GM10248 (cell line): ENCODE measurements at regions of chr12 and their contacts with region 1.

Region 1: DNA sequence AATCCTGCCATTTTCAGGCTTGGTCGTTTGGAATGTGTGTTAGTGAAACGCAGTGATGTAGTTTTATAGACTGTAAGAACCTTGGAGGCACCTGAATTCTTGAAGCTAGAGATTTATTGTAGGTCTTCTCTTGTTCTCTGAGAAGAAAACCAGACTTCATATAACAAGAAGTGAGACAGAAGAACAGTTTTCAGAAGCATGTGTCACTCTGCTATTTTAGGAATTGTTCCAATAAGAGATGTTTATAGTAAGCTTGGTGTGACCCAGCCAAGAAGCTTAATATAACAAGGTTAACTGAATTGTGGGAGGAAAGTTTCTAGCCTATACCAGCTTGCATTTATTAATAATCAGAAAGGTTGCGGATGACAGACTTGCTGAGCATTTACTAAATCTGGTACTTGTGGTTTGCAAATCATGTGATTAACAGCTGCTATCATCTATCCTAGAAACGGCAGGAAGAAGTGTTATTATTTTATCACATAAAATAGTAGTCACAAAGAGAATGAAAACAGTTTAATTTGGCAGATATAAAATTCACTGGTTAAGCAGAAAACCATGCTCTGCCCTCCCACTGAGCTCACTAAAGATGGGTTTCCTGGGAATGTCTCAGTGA is 49.2 kb upstream of the BCAT1 start:
- DNase-seq: peak; percentile 62
- CTCF ChIP-seq: no peak

Region 2: DNA sequence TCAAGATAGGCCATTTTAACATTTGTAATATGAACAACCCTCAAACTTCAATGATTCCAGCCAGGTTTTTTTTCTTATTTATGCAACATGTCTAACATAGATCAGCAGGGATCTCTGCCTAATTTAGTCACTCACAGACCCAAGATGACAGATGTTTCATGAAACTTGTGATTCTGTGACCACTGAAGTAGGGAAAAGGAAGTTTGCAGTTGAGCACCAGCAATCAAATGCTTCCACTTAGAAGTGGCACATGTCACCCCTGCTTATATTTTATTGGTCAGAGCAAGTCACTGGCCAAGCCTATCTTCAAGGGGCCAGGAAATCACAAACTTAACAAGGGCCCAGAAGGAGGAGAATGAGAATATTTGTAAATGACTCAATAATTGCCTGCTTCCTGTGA is 199.7 kb before region 1 on chr12:
- CTCF ChIA-PET with region 1: no interaction called
- POLR2A ChIA-PET with region 1: no interaction called
- DNase-seq: peak; percentile 24
- CTCF ChIP-seq: no peak

Region 3: DNA sequence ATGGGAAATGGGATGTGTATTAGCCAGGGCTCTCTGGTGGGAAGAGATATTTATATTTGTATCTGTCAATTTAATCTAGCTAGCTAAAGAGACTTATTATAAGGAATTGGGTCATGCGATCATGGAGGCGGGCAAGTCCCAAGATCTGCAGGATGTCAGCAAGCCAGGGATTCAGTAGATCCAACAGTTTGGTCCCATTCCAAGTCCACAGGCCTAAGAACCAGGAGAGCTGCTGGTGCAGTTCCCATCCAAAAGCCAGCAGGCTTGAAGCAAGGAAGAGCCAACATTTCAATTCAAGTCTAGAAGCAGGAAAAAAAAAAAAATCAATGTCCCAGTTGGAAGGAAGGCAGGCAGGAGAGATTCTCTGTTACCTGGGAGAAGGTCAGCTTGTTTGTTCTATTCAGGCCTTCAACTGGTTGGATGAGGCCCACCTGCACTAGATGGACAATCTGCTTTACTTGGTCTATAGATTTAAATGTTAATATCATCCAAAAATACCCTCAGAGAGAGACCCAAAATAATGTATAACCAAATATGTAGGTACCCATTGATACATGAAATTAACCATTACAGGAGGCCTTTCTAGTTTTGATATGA is 11.5 kb after region 1 on chr12:
- CTCF ChIA-PET with region 1: interaction called, 29 read pairs
- POLR2A ChIA-PET with region 1: no interaction called
- DNase-seq: no peak
- CTCF ChIP-seq: no peak

Region 4: DNA sequence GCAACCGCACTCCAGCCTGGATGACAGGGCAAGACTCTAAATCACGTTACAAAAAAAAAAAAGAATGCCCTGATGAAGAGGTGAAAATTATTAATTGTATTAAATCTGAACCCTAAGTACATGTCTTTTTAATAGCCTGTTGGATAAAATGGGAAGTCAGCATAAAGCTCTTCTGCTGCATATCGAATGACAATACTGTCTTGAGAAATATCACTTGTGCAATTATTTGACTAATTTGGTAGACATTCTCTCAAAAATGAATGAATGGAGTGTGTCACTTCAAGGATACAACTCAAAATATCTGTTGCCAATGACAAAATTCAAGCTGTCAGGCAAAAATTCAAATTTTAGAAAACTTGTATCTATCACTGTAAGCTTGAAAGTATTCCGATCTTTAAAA is 158.0 kb after region 1 on chr12:
- CTCF ChIA-PET with region 1: interaction called, 32 read pairs
- POLR2A ChIA-PET with region 1: no interaction called
- DNase-seq: no peak
- CTCF ChIP-seq: no peak